IMR-90 (cell line): ENCODE measurements at regions of chr15 and their contacts with region 1.

Region 1: DNA sequence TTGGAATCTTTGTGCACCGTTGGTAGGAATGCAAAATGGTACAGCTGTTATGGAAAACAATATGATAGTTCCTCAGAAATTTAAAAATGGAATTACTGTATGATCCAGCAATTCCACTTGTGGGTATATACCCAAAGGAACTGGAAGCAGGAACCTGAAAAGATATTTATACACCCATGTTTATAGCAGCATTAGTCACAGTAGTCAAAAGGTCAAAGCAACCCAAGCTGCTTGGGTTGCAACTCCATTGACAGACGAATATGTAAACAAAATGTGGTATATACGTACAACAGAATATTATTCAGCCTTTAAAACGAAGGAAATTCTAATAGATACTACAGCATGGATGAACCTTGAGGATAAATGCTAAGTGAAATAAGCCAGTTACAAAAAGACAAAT is 35.0 kb upstream of the CAPN3 start:
- DNase-seq: peak; percentile 86
- ATAC-seq: peak; percentile 94
- H3K4me3 ChIP-seq: no peak overlapping the region
- H3K27ac ChIP-seq: no peak overlapping the region
- H3K4me1 ChIP-seq: peaks cover 3% of the 10 kb centered on the region
- H3K27me3 ChIP-seq: no peaks in the 10 kb centered on the region
- CTCF ChIP-seq: no peak
- POLR2A ChIP-seq: no peak
- RAD21 ChIP-seq: no peak

Region 2: DNA sequence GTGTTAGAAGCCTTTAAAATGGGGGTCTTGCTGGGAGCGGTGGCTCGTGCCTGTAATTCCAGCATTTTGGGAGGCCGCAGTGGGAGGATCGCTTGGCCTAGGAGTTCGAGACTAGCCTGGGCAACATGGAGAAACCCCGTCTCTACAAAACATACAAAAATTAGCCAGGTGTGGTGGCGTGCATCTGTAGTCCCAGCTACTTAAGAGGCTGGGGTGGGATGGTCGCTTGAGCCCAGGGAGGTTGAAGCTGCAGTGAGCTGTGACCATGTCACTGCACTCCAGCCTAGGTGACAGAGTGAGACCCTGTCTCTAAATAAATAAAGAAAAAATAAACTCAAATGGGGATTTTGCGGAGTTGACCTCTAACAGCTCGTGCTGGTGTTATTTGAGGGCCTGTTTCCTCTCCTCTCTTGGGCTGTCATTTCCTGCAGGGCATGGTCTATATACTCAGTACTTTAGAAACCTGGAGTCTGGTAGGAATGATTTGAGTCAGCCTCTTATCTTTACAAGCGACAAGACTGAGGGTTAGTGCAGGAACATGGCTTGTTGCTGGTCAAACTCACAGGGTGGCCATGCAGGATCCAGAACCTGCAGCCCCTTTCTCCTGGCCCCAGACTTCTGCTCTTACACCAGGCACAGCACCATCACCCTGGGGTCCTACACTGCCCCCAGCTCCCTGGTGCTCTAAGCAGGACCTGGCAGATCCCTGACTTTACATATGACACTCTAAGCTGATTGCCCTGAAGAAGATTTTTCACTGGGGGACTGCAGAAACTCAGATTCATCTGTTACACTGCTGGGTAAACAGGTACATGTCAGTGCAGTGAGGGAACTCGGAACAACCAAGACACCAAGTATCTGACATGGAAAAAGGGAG is 367.0 kb before region 1 on chr15:
- CTCF ChIA-PET with region 1: no interaction called
- POLR2A ChIA-PET with region 1: no interaction called
- dilution Hi-C with region 1: no loop called
- in situ Hi-C with region 1: no loop called
- intact Hi-C with region 1: no loop called
- DNase-seq: peak; percentile 38
- ATAC-seq: peak; percentile 49
- H3K4me3 ChIP-seq: no peak overlapping the region
- H3K27ac ChIP-seq: no peak overlapping the region
- H3K4me1 ChIP-seq: peaks cover 14% of the 10 kb centered on the region
- H3K27me3 ChIP-seq: no peaks in the 10 kb centered on the region
- CTCF ChIP-seq: no peak
- POLR2A ChIP-seq: no peak
- RAD21 ChIP-seq: no peak

Region 3: GRCh38 chr15:42100021-42100800 is 224.1 kb before region 1 on chr15:
- CTCF ChIA-PET with region 1: no interaction called
- POLR2A ChIA-PET with region 1: interaction called, 17 read pairs
- dilution Hi-C with region 1: no loop called
- in situ Hi-C with region 1: no loop called
- intact Hi-C with region 1: no loop called
- DNase-seq: peak; percentile 6
- ATAC-seq: no peak
- H3K4me3 ChIP-seq: no peak overlapping the region
- H3K27ac ChIP-seq: no peak overlapping the region
- H3K4me1 ChIP-seq: no peaks in the 10 kb centered on the region
- H3K27me3 ChIP-seq: peaks cover 38% of the 10 kb centered on the region
- CTCF ChIP-seq: no peak
- POLR2A ChIP-seq: no peak
- RAD21 ChIP-seq: no peak

Region 4: GRCh38 chr15:42289166-42289565 is 35.1 kb before region 1 on chr15:
- CTCF ChIA-PET with region 1: no interaction called
- POLR2A ChIA-PET with region 1: no interaction called
- dilution Hi-C with region 1: no loop called
- in situ Hi-C with region 1: no loop called
- intact Hi-C with region 1: loop called (anchors 1 kb)
- DNase-seq: no peak
- ATAC-seq: no peak
- H3K4me3 ChIP-seq: no peak overlapping the region
- H3K27ac ChIP-seq: no peak overlapping the region
- H3K4me1 ChIP-seq: peaks cover 3% of the 10 kb centered on the region; the same call in 1 of the 2 replicates
- H3K27me3 ChIP-seq: no peaks in the 10 kb centered on the region
- CTCF ChIP-seq: no peak
- POLR2A ChIP-seq: no peak
- RAD21 ChIP-seq: no peak

Region 5: DNA sequence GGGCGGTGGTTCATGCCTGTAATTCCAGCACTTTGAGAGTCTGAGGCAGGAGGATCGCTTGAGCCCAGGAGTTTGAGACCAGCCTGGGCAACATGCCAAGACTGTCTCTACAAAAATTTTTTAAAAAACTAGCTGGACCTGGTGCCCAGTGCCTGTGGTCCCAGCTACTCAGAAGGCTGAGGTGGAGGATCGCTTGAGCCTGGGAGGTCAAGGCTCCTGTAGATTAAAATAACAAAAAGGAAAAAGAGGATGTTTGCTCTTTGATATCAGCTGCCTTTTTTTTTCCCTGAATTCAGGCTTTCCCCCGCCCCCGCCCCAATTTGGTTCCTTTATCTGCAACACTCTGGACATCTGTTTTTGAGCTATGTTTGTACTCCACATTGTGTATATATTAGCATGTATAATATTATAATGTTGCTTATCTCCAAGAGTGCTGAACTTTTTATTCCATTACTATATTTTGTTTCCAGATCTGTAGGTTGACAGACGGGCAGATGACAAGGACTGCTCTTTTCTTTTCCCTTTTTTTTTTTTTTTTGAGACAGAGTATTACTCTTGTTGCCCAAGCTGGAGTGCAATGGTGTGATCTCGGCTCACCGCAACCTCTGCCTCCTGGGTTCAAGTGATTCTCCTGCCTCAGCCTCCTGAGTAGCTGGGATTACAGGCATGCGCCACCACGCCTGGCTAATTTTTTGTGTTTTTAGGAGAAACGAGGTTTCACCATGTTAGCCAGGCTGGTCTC is 175.7 kb after region 1 on chr15:
- CTCF ChIA-PET with region 1: no interaction called
- POLR2A ChIA-PET with region 1: no interaction called
- dilution Hi-C with region 1: no loop called
- in situ Hi-C with region 1: no loop called
- intact Hi-C with region 1: no loop called
- DNase-seq: no peak
- ATAC-seq: no peak
- H3K4me3 ChIP-seq: no peak overlapping the region
- H3K27ac ChIP-seq: peak overlapping the region; percentile 66; the same call in 1 of the 2 replicates
- H3K4me1 ChIP-seq: peaks cover 7% of the 10 kb centered on the region; the same call in 1 of the 2 replicates
- H3K27me3 ChIP-seq: no peaks in the 10 kb centered on the region
- CTCF ChIP-seq: no peak
- POLR2A ChIP-seq: no peak
- RAD21 ChIP-seq: no peak

Region 6: DNA sequence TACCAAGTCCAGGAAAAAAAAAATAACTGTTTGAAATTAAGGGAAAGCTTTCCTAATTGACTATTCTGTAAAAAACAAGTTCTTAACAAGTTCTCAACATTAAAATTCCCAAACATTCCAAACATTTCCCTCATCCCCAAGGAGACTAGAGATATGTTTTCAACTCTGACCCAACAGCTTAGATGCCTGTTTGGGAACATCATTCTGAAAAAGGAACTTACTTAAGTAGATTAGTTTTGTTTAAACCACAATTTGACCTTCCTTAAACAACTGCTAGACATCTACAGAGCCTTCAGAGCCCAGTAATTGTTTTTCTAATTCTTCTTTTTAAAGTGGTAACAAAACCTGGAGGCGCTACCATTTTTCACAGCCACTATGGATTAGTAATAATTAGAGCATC is 768.7 kb after region 1 on chr15:
- CTCF ChIA-PET with region 1: no interaction called
- POLR2A ChIA-PET with region 1: no interaction called
- dilution Hi-C with region 1: no loop called
- in situ Hi-C with region 1: no loop called
- intact Hi-C with region 1: no loop called
- DNase-seq: peak; percentile 85
- ATAC-seq: peak; percentile 77
- H3K4me3 ChIP-seq: no peak overlapping the region
- H3K27ac ChIP-seq: peak overlapping the region; percentile 34; the same call in 1 of the 2 replicates
- H3K4me1 ChIP-seq: peaks cover 12% of the 10 kb centered on the region
- H3K27me3 ChIP-seq: no peaks in the 10 kb centered on the region
- CTCF ChIP-seq: no peak
- POLR2A ChIP-seq: no peak
- RAD21 ChIP-seq: no peak